Heart right ventricle (tissue), 16 donors: ENCODE measurements at regions of chr5 and their contacts with region 1.

Region 1: DNA sequence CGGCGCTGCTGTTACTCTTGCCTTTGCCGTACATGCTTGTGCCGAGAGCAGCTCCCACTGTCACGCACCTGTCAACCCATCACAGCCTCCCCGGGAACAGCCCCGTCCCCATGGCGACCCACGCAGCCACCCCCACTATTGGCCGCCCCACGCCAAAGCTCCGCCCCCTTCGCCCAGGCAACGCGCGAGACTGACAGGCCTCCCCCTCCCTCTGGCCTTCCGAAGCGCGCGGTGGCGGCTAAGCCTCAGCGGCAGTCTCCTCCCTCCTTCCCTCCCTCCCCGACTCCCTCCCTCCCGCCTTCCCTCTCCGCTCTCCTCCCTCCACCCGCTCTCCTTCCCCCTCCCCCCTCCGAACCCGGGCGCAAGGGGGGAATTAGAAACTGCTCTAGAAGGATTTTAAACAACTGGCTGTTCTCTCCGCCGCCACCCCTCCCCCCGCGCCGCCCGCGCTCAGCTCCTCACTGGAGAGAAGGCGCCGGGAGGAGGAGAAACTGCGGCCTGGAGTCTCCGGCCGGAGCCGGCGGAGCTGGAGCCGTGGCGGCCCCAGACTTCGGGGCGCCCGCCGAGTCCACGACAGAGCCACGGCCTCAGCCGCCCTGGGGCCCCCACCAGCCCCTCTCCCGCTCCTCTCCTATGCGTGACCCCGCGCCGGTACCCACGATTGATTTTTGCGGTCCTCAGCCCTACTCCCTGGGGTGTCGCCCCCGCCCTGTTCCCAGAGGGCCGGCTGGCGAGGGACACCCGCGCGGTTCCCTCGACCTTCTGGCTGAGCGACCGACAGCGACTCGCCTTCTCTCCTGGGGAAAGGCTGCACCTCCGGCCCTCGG is at the start of gene SSBP2:
- DNase-seq: peak; percentile 100
- ATAC-seq: peak; percentile 93 to 98 (median 97)
- H3K4me3 ChIP-seq: peak within 1 kb of the TSS; percentile 50 to 89 (median 84)
- H3K27ac ChIP-seq: peak within 1 kb of the TSS; percentile 94 to 100 (median 99)
- H3K4me1 ChIP-seq: peaks cover 0 to 72% (median 45%) of the 10 kb centered on the region in 9 donors
- H3K27me3 ChIP-seq: no peaks in the 10 kb centered on the region
- CTCF ChIP-seq: peak in 1 of 9 donors; percentile 9
- total RNA-seq, gene SSBP2: 30.0 to 85.9 (median 56.2) TPM

Region 2: GRCh38 chr5:81506900-81507588 is 244.2 kb before region 1 on chr5:
- intact Hi-C with region 1: loop called in 9 of 10 experiments (anchors 2 to 5 kb)
- DNase-seq: peak in 1 of 2 donors; percentile 80
- ATAC-seq: peak; percentile 97 to 100 (median 98)
- H3K4me3 ChIP-seq: peak overlapping the region in 1 of 10 donors; percentile 9
- H3K27ac ChIP-seq: peak overlapping the region in 6 of 10 donors; percentile 45 to 74 (median 61)
- H3K4me1 ChIP-seq: peaks cover 0 to 27% (median 20%) of the 10 kb centered on the region in 9 donors
- H3K27me3 ChIP-seq: no peaks in the 10 kb centered on the region
- CTCF ChIP-seq: peak; percentile 82 to 97 (median 85)

Region 3: DNA sequence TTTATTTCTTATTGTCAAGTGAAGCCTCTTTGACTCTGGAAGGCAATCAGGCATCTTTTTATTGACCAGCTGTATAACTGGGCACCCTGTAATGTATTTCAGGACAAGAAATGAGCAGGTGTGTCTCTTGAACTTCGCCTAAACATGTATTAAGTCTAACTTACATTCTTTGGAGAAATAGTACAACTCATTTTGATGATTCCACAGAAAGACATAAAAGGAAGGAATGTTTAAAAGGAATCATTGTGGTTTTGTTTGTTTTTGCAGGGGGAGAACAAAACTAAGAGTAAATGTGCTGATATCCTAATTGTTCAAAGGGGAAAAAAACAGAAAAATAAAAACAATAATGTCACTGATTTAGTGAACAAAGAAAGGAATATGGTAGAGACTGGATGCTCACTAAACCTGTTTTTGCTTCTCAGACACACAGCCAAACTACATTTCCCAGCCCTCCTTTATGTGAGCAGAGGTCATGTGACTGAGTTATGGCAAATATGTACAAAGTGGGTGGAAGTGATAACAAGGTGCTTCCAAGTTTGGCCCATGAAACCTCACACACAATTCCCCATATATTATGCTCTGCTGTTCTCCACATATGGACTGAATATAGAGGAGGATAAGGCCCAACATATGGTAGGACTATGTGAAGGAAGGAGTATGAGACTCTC is 206.7 kb before region 1 on chr5:
- intact Hi-C with region 1: no loop called
- DNase-seq: no peak
- ATAC-seq: no peak
- H3K4me3 ChIP-seq: no peak overlapping the region
- H3K27ac ChIP-seq: no peak overlapping the region
- H3K4me1 ChIP-seq: no peaks in the 10 kb centered on the region
- H3K27me3 ChIP-seq: no peaks in the 10 kb centered on the region
- CTCF ChIP-seq: no peak

Region 4: GRCh38 chr5:81773574-81773973 is 22.4 kb after region 1 on chr5:
- intact Hi-C with region 1: loop called in 1 of 10 experiments (anchors 2 kb)
- DNase-seq: no peak
- ATAC-seq: peak in 3 of 8 donors; percentile 28 to 52 (median 34)
- H3K4me3 ChIP-seq: no peak overlapping the region
- H3K27ac ChIP-seq: peak overlapping the region in 6 of 10 donors; percentile 1 to 48 (median 30)
- H3K4me1 ChIP-seq: peaks cover 0 to 29% (median 9%) of the 10 kb centered on the region in 9 donors
- H3K27me3 ChIP-seq: no peaks in the 10 kb centered on the region
- CTCF ChIP-seq: no peak

Region 5: DNA sequence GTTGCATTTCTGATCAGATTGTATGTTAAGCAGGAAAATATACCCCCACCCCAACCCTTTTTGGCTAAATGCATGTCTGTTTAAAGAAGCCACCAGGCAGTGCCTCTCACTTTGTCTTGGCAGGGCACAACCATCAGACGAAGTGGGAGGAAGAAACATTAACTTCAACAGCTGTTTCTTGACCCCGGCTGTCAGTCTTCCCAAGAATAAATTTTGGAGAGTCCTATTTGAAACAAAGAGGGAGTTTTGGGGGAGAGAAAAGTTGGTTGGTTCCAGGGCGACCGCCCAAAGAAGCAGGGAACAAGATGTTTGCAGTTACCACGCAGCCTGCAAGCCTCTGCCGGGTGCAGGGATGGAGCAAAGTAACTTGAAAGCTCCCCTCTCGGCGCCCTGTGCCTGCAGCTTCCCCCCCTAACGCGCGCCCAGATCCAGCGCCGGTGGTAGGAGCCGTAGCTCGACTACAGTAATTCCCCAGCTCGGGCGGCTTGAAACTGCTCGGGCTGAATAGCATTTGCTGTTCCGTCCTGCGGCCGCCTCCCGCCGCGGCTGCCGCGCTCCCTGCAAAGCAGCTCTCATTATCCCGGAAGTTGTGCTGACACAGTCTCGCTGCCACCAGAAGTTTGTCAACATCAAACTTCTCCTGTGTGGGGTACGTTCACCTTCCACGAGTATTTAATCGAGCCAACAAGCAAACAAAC is 100.4 kb after region 1 on chr5:
- intact Hi-C with region 1: loop called in 9 of 10 experiments (anchors 1 to 5 kb)
- DNase-seq: peak; percentile 97 to 98
- ATAC-seq: peak; percentile 92 to 97 (median 95)
- H3K4me3 ChIP-seq: peak overlapping the region; percentile 13 to 63 (median 58)
- H3K27ac ChIP-seq: peak overlapping the region; percentile 88 to 97 (median 94)
- H3K4me1 ChIP-seq: peaks cover 13 to 81% (median 54%) of the 10 kb centered on the region in 9 donors
- H3K27me3 ChIP-seq: no peaks in the 10 kb centered on the region
- CTCF ChIP-seq: no peak

Region 6: GRCh38 chr5:82165740-82166530 is 414.7 kb after region 1 on chr5:
- intact Hi-C with region 1: loop called in 3 of 10 experiments (anchors 10 kb)
- DNase-seq: peak; percentile 38 to 77
- ATAC-seq: peak; percentile 97 to 100 (median 99)
- H3K4me3 ChIP-seq: no peak overlapping the region
- H3K27ac ChIP-seq: peak overlapping the region in 6 of 10 donors; percentile 8 to 59 (median 38)
- H3K4me1 ChIP-seq: peaks cover 0 to 33% (median 12%) of the 10 kb centered on the region in 9 donors
- H3K27me3 ChIP-seq: no peaks in the 10 kb centered on the region
- CTCF ChIP-seq: peak; percentile 52 to 85 (median 76)